Natural killer cell (primary cell): ENCODE measurements at regions of chr6 and their contacts with region 1.

Region 1: DNA sequence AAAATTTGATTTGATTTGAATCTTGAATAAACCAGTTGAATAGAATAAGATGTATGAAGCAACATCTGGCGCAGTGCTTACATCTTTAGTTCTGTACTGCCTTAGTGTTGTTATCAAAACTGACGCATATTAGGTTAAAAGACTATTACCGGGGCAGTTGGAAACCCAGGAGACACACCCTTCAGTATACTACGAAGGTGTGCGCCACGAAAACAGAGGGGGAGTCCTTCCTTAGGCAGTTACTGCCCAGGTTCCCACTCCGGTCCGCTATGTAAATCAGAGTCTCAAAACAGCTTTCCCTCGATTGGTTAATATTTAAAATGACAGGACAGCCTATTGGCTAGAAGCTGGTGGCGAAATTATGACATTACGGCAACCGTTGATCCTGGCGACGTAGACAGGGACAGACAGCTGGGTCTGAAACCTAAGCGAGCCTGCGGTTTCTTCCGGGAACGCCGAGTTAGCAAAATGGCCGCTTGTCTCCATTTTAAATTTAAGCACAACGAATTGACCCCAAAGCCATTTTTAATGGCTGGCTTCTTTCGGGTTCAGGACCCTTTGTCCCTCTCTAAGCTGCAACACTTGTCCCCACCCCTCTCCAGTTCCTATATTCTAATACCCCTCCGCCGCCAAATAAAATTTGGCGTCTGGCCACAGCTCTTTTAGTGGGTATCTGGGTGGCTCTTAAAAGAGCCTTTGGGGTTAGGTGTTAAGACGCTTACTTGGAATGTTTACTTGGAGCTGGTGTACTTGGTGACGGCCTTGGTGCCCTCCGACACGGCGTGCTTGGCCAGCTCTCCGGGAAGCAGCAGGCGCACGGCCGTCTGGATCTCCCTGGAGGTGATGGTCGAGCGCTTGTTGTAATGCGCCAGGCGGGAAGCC is 35.8 kb downstream of the HFE start:
- DNase-seq: peak; percentile 75 to 98
- ATAC-seq: peak; percentile 54 to 76 (median 63)
- H3K4me3 ChIP-seq: peak overlapping the region; percentile 82
- H3K4me3 Mint-ChIP-seq: peak overlapping the region; percentile 99
- H3K27ac ChIP-seq: peak overlapping the region; percentile 97
- H3K27ac Mint-ChIP-seq: peak overlapping the region; percentile 98 to 100
- H3K4me1 ChIP-seq: peaks cover 26% of the 10 kb centered on the region
- H3K4me1 Mint-ChIP-seq: peaks cover 42 to 52% of the 10 kb centered on the region in 2 donors
- H3K27me3 ChIP-seq: no peaks in the 10 kb centered on the region
- H3K27me3 Mint-ChIP-seq: no peaks in the 10 kb centered on the region
- CTCF ChIP-seq: no peak

Region 2: GRCh38 chr6:26054857-26055669 is 68.0 kb before region 1 on chr6:
- intact Hi-C with region 1: loop called (anchors 2 kb)
- DNase-seq: peak; percentile 83 to 92
- ATAC-seq: peak; percentile 71 to 82 (median 71)
- H3K4me3 ChIP-seq: peak overlapping the region; percentile 78
- H3K4me3 Mint-ChIP-seq: peak overlapping the region; percentile 96
- H3K27ac ChIP-seq: peak overlapping the region; percentile 92
- H3K27ac Mint-ChIP-seq: peak overlapping the region; percentile 98 to 99
- H3K4me1 ChIP-seq: peaks cover 19% of the 10 kb centered on the region
- H3K4me1 Mint-ChIP-seq: peaks cover 29 to 35% of the 10 kb centered on the region in 2 donors
- H3K27me3 ChIP-seq: no peaks in the 10 kb centered on the region
- H3K27me3 Mint-ChIP-seq: no peaks in the 10 kb centered on the region
- CTCF ChIP-seq: no peak

Region 3: GRCh38 chr6:26204332-26205165 is 81.5 kb after region 1 on chr6:
- intact Hi-C with region 1: loop called (anchors 1 kb)
- DNase-seq: peak; percentile 78 to 97
- ATAC-seq: peak; percentile 63 to 81 (median 69)
- H3K4me3 ChIP-seq: peak overlapping the region; percentile 81
- H3K4me3 Mint-ChIP-seq: no peak overlapping the region
- H3K27ac ChIP-seq: peak overlapping the region; percentile 96
- H3K27ac Mint-ChIP-seq: no peak overlapping the region
- H3K4me1 ChIP-seq: peaks cover 25% of the 10 kb centered on the region
- H3K4me1 Mint-ChIP-seq: peaks cover 13 to 19% of the 10 kb centered on the region in 2 donors
- H3K27me3 ChIP-seq: no peaks in the 10 kb centered on the region
- H3K27me3 Mint-ChIP-seq: no peaks in the 10 kb centered on the region
- CTCF ChIP-seq: peak; percentile 23

Region 4: GRCh38 chr6:26270903-26271667 is 148.1 kb after region 1 on chr6:
- intact Hi-C with region 1: loop called (anchors 2 kb)
- DNase-seq: peak; percentile 78 to 92
- ATAC-seq: peak in 2 of 3 donors; percentile 17 to 20
- H3K4me3 ChIP-seq: peak overlapping the region; percentile 62
- H3K4me3 Mint-ChIP-seq: no peak overlapping the region
- H3K27ac ChIP-seq: peak overlapping the region; percentile 92
- H3K27ac Mint-ChIP-seq: no peak overlapping the region
- H3K4me1 ChIP-seq: peaks cover 30% of the 10 kb centered on the region
- H3K4me1 Mint-ChIP-seq: peaks cover 14 to 21% of the 10 kb centered on the region in 2 donors
- H3K27me3 ChIP-seq: no peaks in the 10 kb centered on the region
- H3K27me3 Mint-ChIP-seq: no peaks in the 10 kb centered on the region
- CTCF ChIP-seq: no peak

Region 5: DNA sequence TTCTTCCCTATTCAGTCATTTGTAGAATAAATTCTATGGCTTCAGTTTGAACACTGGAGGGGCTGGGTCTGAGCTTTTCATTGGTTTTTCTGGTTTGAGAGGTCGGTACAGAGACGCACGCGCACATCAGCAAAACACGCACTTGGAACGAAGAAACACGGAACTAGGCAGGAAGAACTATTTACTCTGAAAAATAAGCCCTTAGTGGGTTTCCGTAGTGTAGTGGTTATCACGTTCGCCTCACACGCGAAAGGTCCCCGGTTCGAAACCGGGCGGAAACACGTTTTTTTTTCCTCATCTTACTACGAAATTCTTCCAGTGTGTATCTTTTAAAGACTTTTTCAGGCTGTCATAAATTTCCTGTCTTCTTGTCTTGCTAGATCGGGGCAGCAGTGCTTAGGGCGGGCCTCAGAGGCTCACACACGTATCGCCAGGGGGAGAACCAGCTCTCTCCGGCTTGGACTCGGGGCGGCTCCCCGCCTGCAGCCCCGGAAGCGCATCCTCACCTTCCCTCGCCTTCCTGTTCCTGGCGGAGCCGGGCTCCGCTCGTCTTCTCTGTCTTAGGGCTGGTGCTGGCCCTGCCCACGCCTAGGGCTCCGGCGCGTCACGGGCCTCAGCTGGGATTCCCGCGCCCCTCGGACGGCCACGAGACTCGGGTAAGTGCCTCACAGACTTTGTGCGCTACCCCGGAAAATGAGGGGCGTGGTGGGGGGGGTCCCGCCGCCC is 415.0 kb after region 1 on chr6 and contains the start of gene HMGN4:
- intact Hi-C with region 1: loop called (anchors 5 kb)
- DNase-seq: peak; percentile 73 to 97
- ATAC-seq: peak; percentile 60 to 80 (median 69)
- H3K4me3 ChIP-seq: peak within 1 kb of the TSS; percentile 87
- H3K4me3 Mint-ChIP-seq: peak within 1 kb of the TSS; percentile 95
- H3K27ac ChIP-seq: peak within 1 kb of the TSS; percentile 89
- H3K27ac Mint-ChIP-seq: peak within 1 kb of the TSS; percentile 99 to 100
- H3K4me1 ChIP-seq: peaks cover 37% of the 10 kb centered on the region
- H3K4me1 Mint-ChIP-seq: peaks cover 67 to 68% of the 10 kb centered on the region in 2 donors
- H3K27me3 ChIP-seq: no peaks in the 10 kb centered on the region
- H3K27me3 Mint-ChIP-seq: peaks cover 8% of the 10 kb centered on the region in 2 donors
- CTCF ChIP-seq: no peak
- total RNA-seq, gene HMGN4: 55.7 to 80.6 (median 70.3) TPM